ENCODE measurements at regions of chr13 and their contacts with region 1.

Region 1: GRCh38 chr13:29935309-29935981 is 85.0 kb upstream of the UBL3 start:
- DNase-seq: peak; percentile 96
- ATAC-seq: peak; percentile 90
- H3K4me3 Mint-ChIP-seq: peak overlapping the region; percentile 81
- H3K27ac Mint-ChIP-seq: peak overlapping the region; percentile 92
- H3K4me1 Mint-ChIP-seq: peaks cover 47% of the 10 kb centered on the region
- H3K27me3 Mint-ChIP-seq: no peaks in the 10 kb centered on the region

Region 2: GRCh38 chr13:29810145-29810742 is 125.2 kb before region 1 on chr13:
- CTCF ChIA-PET with region 1: no interaction called
- DNase-seq: no peak
- ATAC-seq: no peak
- H3K4me3 Mint-ChIP-seq: no peak overlapping the region
- H3K27ac Mint-ChIP-seq: no peak overlapping the region
- H3K4me1 Mint-ChIP-seq: peaks cover 11% of the 10 kb centered on the region
- H3K27me3 Mint-ChIP-seq: no peaks in the 10 kb centered on the region

Region 3: DNA sequence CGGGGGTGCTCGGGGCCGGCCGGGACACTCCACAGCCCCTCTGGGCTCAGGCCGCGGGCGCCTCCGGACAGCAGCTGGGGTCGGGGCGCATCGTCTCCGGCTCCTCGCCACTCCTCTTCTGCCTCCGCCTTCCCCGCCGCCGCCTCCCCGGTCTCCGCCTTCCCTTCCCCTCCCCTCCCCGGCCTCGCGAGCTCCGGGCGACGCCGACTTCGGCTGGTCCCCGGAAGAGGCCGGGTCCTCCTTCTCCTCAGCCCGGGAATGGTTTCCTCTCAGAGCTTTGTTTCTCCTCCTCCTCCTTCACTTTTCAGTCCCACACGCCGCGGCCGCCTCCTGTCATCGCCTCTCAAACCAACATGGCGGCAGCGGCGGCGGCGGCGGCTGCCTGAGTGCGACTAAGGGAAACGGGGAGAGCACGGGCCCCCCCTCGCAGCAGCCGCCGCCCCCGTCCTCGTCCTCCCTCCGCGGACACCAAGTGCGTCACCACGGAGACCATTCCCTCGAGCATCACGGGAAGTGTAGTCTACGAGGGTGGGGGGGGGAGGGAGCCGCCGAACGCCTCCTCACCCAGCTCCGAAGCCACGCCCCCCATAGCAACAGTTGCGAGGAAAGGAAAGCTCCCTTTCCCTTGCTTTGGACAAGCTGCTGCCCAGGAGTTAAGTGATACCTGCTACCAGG is 85.1 kb before region 1 on chr13 and contains the start of gene UBL3:
- CTCF ChIA-PET with region 1: interaction called, 13 read pairs
- DNase-seq: peak; percentile 98
- ATAC-seq: peak; percentile 91
- H3K4me3 Mint-ChIP-seq: peak within 1 kb of the TSS; percentile 89
- H3K27ac Mint-ChIP-seq: peak within 1 kb of the TSS; percentile 99
- H3K4me1 Mint-ChIP-seq: peaks cover 34% of the 10 kb centered on the region
- H3K27me3 Mint-ChIP-seq: no peaks in the 10 kb centered on the region
- total RNA-seq, gene UBL3: 9.6 to 10.2 TPM

Region 4: GRCh38 chr13:29923554-29924481 is 11.6 kb before region 1 on chr13:
- CTCF ChIA-PET with region 1: interaction called, 41 read pairs
- DNase-seq: peak; percentile 65
- ATAC-seq: peak; percentile 55
- H3K4me3 Mint-ChIP-seq: no peak overlapping the region
- H3K27ac Mint-ChIP-seq: no peak overlapping the region
- H3K4me1 Mint-ChIP-seq: peaks cover 30% of the 10 kb centered on the region
- H3K27me3 Mint-ChIP-seq: no peaks in the 10 kb centered on the region

Region 5: DNA sequence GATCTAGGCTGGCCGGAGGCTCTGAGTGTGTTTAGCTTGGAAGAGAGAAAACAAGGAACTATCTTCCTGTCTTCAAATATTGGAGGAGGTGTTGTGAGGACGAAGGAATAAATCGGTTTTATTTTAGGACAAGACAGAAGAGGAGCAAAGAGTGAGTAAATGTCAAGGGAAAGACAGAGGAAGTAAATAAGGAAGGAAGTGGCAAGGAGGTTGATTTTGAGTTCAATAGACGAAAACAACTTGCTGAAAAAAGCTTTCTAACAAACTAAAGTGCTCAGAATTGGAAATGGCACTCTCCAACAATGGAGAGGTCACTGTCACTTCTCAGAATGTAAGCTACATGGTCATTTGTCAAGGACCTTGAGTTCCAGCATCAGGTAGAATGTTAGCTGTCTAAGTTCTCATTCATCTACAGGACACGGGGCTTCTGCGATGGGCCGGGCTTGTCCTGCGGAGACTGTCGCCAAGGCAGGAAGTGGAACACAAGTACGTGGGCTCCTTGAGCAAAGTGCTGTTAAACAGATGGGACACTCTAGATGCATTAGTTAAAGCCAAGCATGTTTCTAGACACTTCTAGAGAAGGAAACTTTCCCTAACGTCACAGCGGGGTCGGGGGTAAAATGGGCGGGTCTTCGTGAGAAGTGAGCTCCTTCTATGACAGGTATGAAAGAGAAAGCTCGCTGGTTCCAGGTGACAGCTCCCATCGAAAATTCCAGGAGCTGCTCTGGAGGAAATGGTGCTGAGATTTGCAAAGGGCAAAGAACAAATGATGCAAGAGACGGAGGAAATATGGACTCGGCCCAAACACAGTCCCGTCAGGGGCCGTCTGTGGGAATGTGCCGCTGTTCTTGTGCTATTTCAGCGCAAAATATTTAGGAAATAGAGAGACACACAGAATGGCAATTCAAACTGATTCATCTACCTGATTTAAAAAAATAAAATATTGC is 18.9 kb after region 1 on chr13:
- CTCF ChIA-PET with region 1: interaction called, 23 read pairs
- DNase-seq: peak; percentile 78
- ATAC-seq: peak; percentile 97
- H3K4me3 Mint-ChIP-seq: peak overlapping the region; percentile 64
- H3K27ac Mint-ChIP-seq: peak overlapping the region; percentile 91
- H3K4me1 Mint-ChIP-seq: peaks cover 45% of the 10 kb centered on the region
- H3K27me3 Mint-ChIP-seq: no peaks in the 10 kb centered on the region

Measured in activated CD8-positive, alpha-beta memory T cell treated with anti-CD3 and anti-CD28 coated beads, Interleukin-2, amount 10 ng/mL, durations not matched to agents 7 days and 5 days (primary cell).